B cell (primary cell): ENCODE measurements at regions of chr12 and their contacts with region 1.

Region 1: GRCh38 chr12:12562585-12563261 is at the start of gene DUSP16:
- DNase-seq: peak; percentile 90
- ATAC-seq: peak; percentile 70
- H3K4me3 ChIP-seq: peak within 1 kb of the TSS; percentile 55 to 78 (median 72)
- H3K4me3 Mint-ChIP-seq: peak within 1 kb of the TSS; percentile 95
- H3K27ac ChIP-seq: peak within 1 kb of the TSS; percentile 38 to 82
- H3K27ac Mint-ChIP-seq: peak within 1 kb of the TSS; percentile 92
- H3K4me1 ChIP-seq: peaks cover 17 to 18% of the 10 kb centered on the region in 2 donors
- H3K4me1 Mint-ChIP-seq: peaks cover 20% of the 10 kb centered on the region
- H3K27me3 ChIP-seq: peaks cover 0 to 9% (median 3%) of the 10 kb centered on the region in 4 experiments
- H3K27me3 Mint-ChIP-seq: peaks cover 8% of the 10 kb centered on the region
- CTCF ChIP-seq: no peak
- total RNA-seq, gene DUSP16: 5.6 and 5.9 TPM in 2 replicates

Region 2: GRCh38 chr12:12482959-12483358 is 79.8 kb before region 1 on chr12:
- CTCF ChIA-PET with region 1: no interaction called
- POLR2A ChIA-PET with region 1: no interaction called
- intact Hi-C with region 1: loop called (anchors 5 kb)
- DNase-seq: peak; percentile 26
- ATAC-seq: peak; percentile 29
- H3K4me3 ChIP-seq: no peak overlapping the region
- H3K4me3 Mint-ChIP-seq: peak overlapping the region; percentile 2
- H3K27ac ChIP-seq: peak overlapping the region in 1 of 2 donors; percentile 41
- H3K27ac Mint-ChIP-seq: peak overlapping the region; percentile 13
- H3K4me1 ChIP-seq: peaks cover 6 to 7% of the 10 kb centered on the region in 2 donors
- H3K4me1 Mint-ChIP-seq: peaks cover 24% of the 10 kb centered on the region
- H3K27me3 ChIP-seq: no peaks in the 10 kb centered on the region
- H3K27me3 Mint-ChIP-seq: no peaks in the 10 kb centered on the region
- CTCF ChIP-seq: no peak

Region 3: GRCh38 chr12:12585115-12585863 is 22.6 kb after region 1 on chr12:
- CTCF ChIA-PET with region 1: no interaction called
- POLR2A ChIA-PET with region 1: no interaction called
- intact Hi-C with region 1: no loop called
- DNase-seq: no peak
- ATAC-seq: no peak
- H3K4me3 ChIP-seq: no peak overlapping the region
- H3K4me3 Mint-ChIP-seq: no peak overlapping the region
- H3K27ac ChIP-seq: no peak overlapping the region
- H3K27ac Mint-ChIP-seq: no peak overlapping the region
- H3K4me1 ChIP-seq: peaks cover 0 to 9% of the 10 kb centered on the region in 2 donors
- H3K4me1 Mint-ChIP-seq: peaks cover 16% of the 10 kb centered on the region
- H3K27me3 ChIP-seq: peaks cover 0 to 5% (median 2%) of the 10 kb centered on the region in 4 experiments
- H3K27me3 Mint-ChIP-seq: peaks cover 15% of the 10 kb centered on the region
- CTCF ChIP-seq: no peak

Region 4: GRCh38 chr12:12654691-12655460 is 92.2 kb after region 1 on chr12:
- CTCF ChIA-PET with region 1: interaction called, 6 read pairs
- POLR2A ChIA-PET with region 1: no interaction called
- intact Hi-C with region 1: loop called (anchors 5 kb)
- DNase-seq: no peak
- ATAC-seq: no peak
- H3K4me3 ChIP-seq: no peak overlapping the region
- H3K4me3 Mint-ChIP-seq: no peak overlapping the region
- H3K27ac ChIP-seq: no peak overlapping the region
- H3K27ac Mint-ChIP-seq: no peak overlapping the region
- H3K4me1 ChIP-seq: peaks cover 3 to 9% of the 10 kb centered on the region in 2 donors
- H3K4me1 Mint-ChIP-seq: peaks cover 6% of the 10 kb centered on the region
- H3K27me3 ChIP-seq: no peaks in the 10 kb centered on the region
- H3K27me3 Mint-ChIP-seq: no peaks in the 10 kb centered on the region
- CTCF ChIP-seq: no peak

Region 5: GRCh38 chr12:12749433-12749832 is 186.7 kb after region 1 on chr12:
- CTCF ChIA-PET with region 1: no interaction called
- POLR2A ChIA-PET with region 1: no interaction called
- intact Hi-C with region 1: no loop called
- DNase-seq: no peak
- ATAC-seq: no peak
- H3K4me3 ChIP-seq: no peak overlapping the region
- H3K4me3 Mint-ChIP-seq: no peak overlapping the region
- H3K27ac ChIP-seq: no peak overlapping the region
- H3K27ac Mint-ChIP-seq: no peak overlapping the region
- H3K4me1 ChIP-seq: no peaks in the 10 kb centered on the region
- H3K4me1 Mint-ChIP-seq: peaks cover 3% of the 10 kb centered on the region
- H3K27me3 ChIP-seq: no peaks in the 10 kb centered on the region
- H3K27me3 Mint-ChIP-seq: no peaks in the 10 kb centered on the region
- CTCF ChIP-seq: no peak